CD4-positive, alpha-beta T cell (primary cell): ENCODE measurements at regions of chr5 and their contacts with region 1.

Region 1: GRCh38 chr5:35852084-35852734 is 4.5 kb upstream of the IL7R start:
- DNase-seq: peak in 6 of 14 experiments; percentile 15 to 84 (median 70)
- ATAC-seq: no peak
- H3K4me3 ChIP-seq: peak overlapping the region; percentile 88
- H3K4me3 Mint-ChIP-seq: peak overlapping the region; percentile 80
- H3K27ac ChIP-seq: peak overlapping the region; percentile 97 to 98
- H3K27ac Mint-ChIP-seq: peak overlapping the region; percentile 99
- H3K4me1 ChIP-seq: peaks cover 50% of the 10 kb centered on the region
- H3K4me1 Mint-ChIP-seq: peaks cover 85% of the 10 kb centered on the region
- H3K27me3 ChIP-seq: no peaks in the 10 kb centered on the region
- H3K27me3 Mint-ChIP-seq: no peaks in the 10 kb centered on the region
- CTCF ChIP-seq: no peak

Region 2: GRCh38 chr5:35617435-35618303 is 234.5 kb before region 1 on chr5 and contains the start of gene SPEF2:
- CTCF ChIA-PET with region 1: no interaction called
- POLR2A ChIA-PET with region 1: interaction called, 6 read pairs
- intact Hi-C with region 1: loop called in 1 of 2 experiments (anchors 5 kb)
- DNase-seq: peak; percentile 55 to 90 (median 68)
- ATAC-seq: peak; percentile 84
- H3K4me3 ChIP-seq: peak within 1 kb of the TSS; percentile 79
- H3K4me3 Mint-ChIP-seq: peak within 1 kb of the TSS; percentile 93
- H3K27ac ChIP-seq: peak within 1 kb of the TSS; percentile 11 to 27
- H3K27ac Mint-ChIP-seq: peak within 1 kb of the TSS; percentile 88
- H3K4me1 ChIP-seq: peaks cover 15% of the 10 kb centered on the region
- H3K4me1 Mint-ChIP-seq: peaks cover 33% of the 10 kb centered on the region
- H3K27me3 ChIP-seq: no peaks in the 10 kb centered on the region
- H3K27me3 Mint-ChIP-seq: no peaks in the 10 kb centered on the region
- CTCF ChIP-seq: peak; percentile 76
- total RNA-seq, gene SPEF2: 3.2 TPM

Region 3: GRCh38 chr5:35672995-35673394 is 179.2 kb before region 1 on chr5:
- CTCF ChIA-PET with region 1: no interaction called
- POLR2A ChIA-PET with region 1: interaction called, 19 read pairs
- intact Hi-C with region 1: loop called in 1 of 2 experiments (anchors 2 kb)
- DNase-seq: peak in 12 of 14 experiments; percentile 3 to 70 (median 23)
- ATAC-seq: peak; percentile 74
- H3K4me3 ChIP-seq: no peak overlapping the region
- H3K4me3 Mint-ChIP-seq: peak overlapping the region; percentile 63
- H3K27ac ChIP-seq: peak overlapping the region in 1 of 2 donors; percentile 25
- H3K27ac Mint-ChIP-seq: peak overlapping the region; percentile 93
- H3K4me1 ChIP-seq: peaks cover 10% of the 10 kb centered on the region
- H3K4me1 Mint-ChIP-seq: peaks cover 78% of the 10 kb centered on the region
- H3K27me3 ChIP-seq: no peaks in the 10 kb centered on the region
- H3K27me3 Mint-ChIP-seq: no peaks in the 10 kb centered on the region
- CTCF ChIP-seq: no peak

Region 4: DNA sequence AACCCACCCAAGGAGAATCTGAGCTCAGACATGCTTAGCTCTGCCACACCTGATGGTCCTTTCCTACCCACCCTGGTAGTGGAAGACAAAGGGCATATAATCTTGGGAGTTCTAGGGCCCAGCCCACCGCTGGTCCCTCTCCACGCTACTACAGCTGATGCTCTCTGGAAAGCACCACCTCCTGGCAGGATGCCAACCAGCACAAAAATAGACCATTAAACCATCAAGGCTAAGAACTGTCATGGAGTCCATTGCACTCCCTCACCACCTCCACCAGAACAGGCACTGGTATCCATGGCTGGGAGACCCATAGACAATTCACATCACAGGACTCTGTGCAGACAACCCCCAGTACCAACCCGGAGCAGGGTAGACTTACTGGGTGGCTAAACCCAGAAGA is 106.5 kb before region 1 on chr5:
- CTCF ChIA-PET with region 1: no interaction called
- POLR2A ChIA-PET with region 1: no interaction called
- intact Hi-C with region 1: no loop called
- DNase-seq: peak in 1 of 14 experiments; percentile 8
- ATAC-seq: no peak
- H3K4me3 ChIP-seq: no peak overlapping the region
- H3K4me3 Mint-ChIP-seq: no peak overlapping the region
- H3K27ac ChIP-seq: no peak overlapping the region
- H3K27ac Mint-ChIP-seq: no peak overlapping the region
- H3K4me1 ChIP-seq: peaks cover 2% of the 10 kb centered on the region
- H3K4me1 Mint-ChIP-seq: peaks cover 34% of the 10 kb centered on the region
- H3K27me3 ChIP-seq: no peaks in the 10 kb centered on the region
- H3K27me3 Mint-ChIP-seq: no peaks in the 10 kb centered on the region
- CTCF ChIP-seq: no peak

Region 5: GRCh38 chr5:35794684-35795375 is 57.4 kb before region 1 on chr5:
- CTCF ChIA-PET with region 1: interaction called, 3 read pairs
- POLR2A ChIA-PET with region 1: interaction called, 42 read pairs
- intact Hi-C with region 1: no loop called
- DNase-seq: no peak
- ATAC-seq: no peak
- H3K4me3 ChIP-seq: no peak overlapping the region
- H3K4me3 Mint-ChIP-seq: peak overlapping the region; percentile 52
- H3K27ac ChIP-seq: peak overlapping the region in 1 of 2 donors; percentile 18
- H3K27ac Mint-ChIP-seq: peak overlapping the region; percentile 92
- H3K4me1 ChIP-seq: peaks cover 54% of the 10 kb centered on the region
- H3K4me1 Mint-ChIP-seq: peaks cover 91% of the 10 kb centered on the region
- H3K27me3 ChIP-seq: no peaks in the 10 kb centered on the region
- H3K27me3 Mint-ChIP-seq: no peaks in the 10 kb centered on the region
- CTCF ChIP-seq: no peak

Region 6: GRCh38 chr5:35830587-35830986 is 21.6 kb before region 1 on chr5:
- CTCF ChIA-PET with region 1: interaction called, 6 read pairs
- POLR2A ChIA-PET with region 1: interaction called, 576 read pairs
- intact Hi-C with region 1: loop called (anchors 1 to 2 kb)
- DNase-seq: peak in 6 of 14 experiments; percentile 43 to 85 (median 71)
- ATAC-seq: peak; percentile 87
- H3K4me3 ChIP-seq: peak overlapping the region; percentile 10
- H3K4me3 Mint-ChIP-seq: peak overlapping the region; percentile 60
- H3K27ac ChIP-seq: peak overlapping the region; percentile 42 to 45
- H3K27ac Mint-ChIP-seq: peak overlapping the region; percentile 87
- H3K4me1 ChIP-seq: peaks cover 61% of the 10 kb centered on the region
- H3K4me1 Mint-ChIP-seq: peaks cover 95% of the 10 kb centered on the region
- H3K27me3 ChIP-seq: no peaks in the 10 kb centered on the region
- H3K27me3 Mint-ChIP-seq: no peaks in the 10 kb centered on the region
- CTCF ChIP-seq: no peak

Region 7: DNA sequence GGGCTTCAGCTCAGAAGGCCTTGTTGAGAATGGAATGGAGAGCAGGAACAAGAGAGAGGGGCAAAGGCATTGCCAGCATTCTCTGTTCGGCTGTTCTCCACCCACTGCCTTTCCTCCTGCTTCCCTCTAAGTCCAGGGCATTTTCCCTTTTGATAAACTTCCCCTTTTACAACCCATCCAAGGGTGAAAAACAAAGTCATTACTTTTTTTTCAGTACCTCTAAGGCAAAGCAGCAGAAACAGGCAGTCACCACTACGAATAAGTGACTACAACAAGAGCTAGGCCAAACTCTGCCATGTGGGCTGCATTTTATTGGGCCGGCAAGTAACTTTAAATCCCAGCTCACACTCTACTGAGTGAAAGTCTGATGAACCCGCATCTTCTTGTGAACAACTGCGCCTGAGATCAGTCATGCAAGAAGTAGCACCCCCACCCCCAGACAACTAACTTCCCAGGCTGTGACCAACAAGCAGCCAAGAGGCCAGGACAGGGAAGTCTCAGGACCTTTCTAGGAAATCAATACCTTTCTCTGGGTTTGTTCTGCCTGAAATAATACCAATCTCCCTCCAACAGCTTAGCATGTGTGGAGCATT is 17.6 kb after region 1 on chr5:
- CTCF ChIA-PET with region 1: no interaction called
- POLR2A ChIA-PET with region 1: interaction called, 278 read pairs
- intact Hi-C with region 1: no loop called
- DNase-seq: no peak
- ATAC-seq: peak; percentile 16
- H3K4me3 ChIP-seq: no peak overlapping the region
- H3K4me3 Mint-ChIP-seq: peak overlapping the region; percentile 31
- H3K27ac ChIP-seq: peak overlapping the region; percentile 1 to 34
- H3K27ac Mint-ChIP-seq: peak overlapping the region; percentile 99
- H3K4me1 ChIP-seq: peaks cover 52% of the 10 kb centered on the region
- H3K4me1 Mint-ChIP-seq: peaks cover 96% of the 10 kb centered on the region
- H3K27me3 ChIP-seq: no peaks in the 10 kb centered on the region
- H3K27me3 Mint-ChIP-seq: no peaks in the 10 kb centered on the region
- CTCF ChIP-seq: no peak

Region 8: DNA sequence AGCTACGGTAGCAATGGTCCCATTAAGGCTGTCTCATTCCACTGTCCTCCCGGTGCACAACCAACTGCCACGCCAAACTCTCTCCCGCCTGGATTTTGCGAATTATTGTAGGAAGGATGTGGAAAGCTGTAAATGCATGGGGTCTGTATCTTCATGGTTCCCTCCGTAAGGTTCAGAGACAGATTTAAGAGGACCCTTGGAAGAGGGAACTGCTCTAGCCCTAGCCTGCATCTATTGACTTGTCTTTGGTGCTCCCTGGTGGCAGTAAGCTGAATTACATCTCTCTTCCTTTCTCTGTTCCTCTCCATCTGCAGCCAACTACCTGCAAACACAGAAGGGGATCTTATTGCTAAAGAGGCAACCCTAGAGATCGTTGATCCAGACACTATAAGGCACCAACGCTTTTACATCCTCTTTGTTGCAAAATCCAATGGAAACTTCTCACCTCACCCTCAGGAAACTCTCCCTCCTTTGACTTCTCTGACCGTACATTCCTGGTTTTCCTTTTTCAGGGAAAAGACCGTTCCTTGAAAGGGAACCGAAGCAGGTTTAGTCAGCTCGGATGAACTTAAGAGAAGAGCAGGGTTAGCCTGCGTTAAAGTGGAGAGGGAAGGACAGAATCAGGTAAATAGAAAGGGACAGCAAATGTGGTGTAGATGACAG is 74.3 kb after region 1 on chr5:
- CTCF ChIA-PET with region 1: interaction called, 39 read pairs
- POLR2A ChIA-PET with region 1: interaction called, 16 read pairs
- intact Hi-C with region 1: no loop called
- DNase-seq: peak in 13 of 14 experiments; percentile 30 to 85 (median 51)
- ATAC-seq: peak; percentile 44
- H3K4me3 ChIP-seq: no peak overlapping the region
- H3K4me3 Mint-ChIP-seq: peak overlapping the region; percentile 80
- H3K27ac ChIP-seq: no peak overlapping the region
- H3K27ac Mint-ChIP-seq: no peak overlapping the region
- H3K4me1 ChIP-seq: peaks cover 22% of the 10 kb centered on the region
- H3K4me1 Mint-ChIP-seq: peaks cover 43% of the 10 kb centered on the region
- H3K27me3 ChIP-seq: no peaks in the 10 kb centered on the region
- H3K27me3 Mint-ChIP-seq: no peaks in the 10 kb centered on the region
- CTCF ChIP-seq: peak; percentile 96